ENCODE measurements at regions of chr4 and their contacts with region 1.

Region 1: GRCh38 chr4:142353149-142353738 is 492.9 kb downstream of the INPP4B start:
- DNase-seq: no peak
- ATAC-seq: peak; percentile 42 to 86 (median 78)
- H3K4me3 ChIP-seq: no peak overlapping the region
- H3K27ac ChIP-seq: no peak overlapping the region
- H3K4me1 ChIP-seq: peaks cover 7 to 27% (median 17%) of the 10 kb centered on the region in 3 donors
- H3K27me3 ChIP-seq: no peaks in the 10 kb centered on the region
- CTCF ChIP-seq: peak; percentile 63 to 83 (median 78)

Region 2: GRCh38 chr4:142130666-142131065 is 222.6 kb before region 1 on chr4:
- intact Hi-C with region 1: no loop called
- DNase-seq: no peak
- ATAC-seq: peak; percentile 43 to 79 (median 71)
- H3K4me3 ChIP-seq: no peak overlapping the region
- H3K27ac ChIP-seq: peak overlapping the region in 2 of 4 donors; percentile 39 to 61
- H3K4me1 ChIP-seq: peaks cover 0 to 14% (median 8%) of the 10 kb centered on the region in 3 donors
- H3K27me3 ChIP-seq: no peaks in the 10 kb centered on the region
- CTCF ChIP-seq: no peak

Region 3: GRCh38 chr4:142703694-142704309 is 350.6 kb after region 1 on chr4:
- intact Hi-C with region 1: loop called in 1 of 3 experiments (anchors 10 kb)
- DNase-seq: no peak
- ATAC-seq: no peak
- H3K4me3 ChIP-seq: no peak overlapping the region
- H3K27ac ChIP-seq: no peak overlapping the region
- H3K4me1 ChIP-seq: no peaks in the 10 kb centered on the region
- H3K27me3 ChIP-seq: no peaks in the 10 kb centered on the region
- CTCF ChIP-seq: no peak

Region 4: GRCh38 chr4:142719854-142720541 is 366.8 kb after region 1 on chr4:
- intact Hi-C with region 1: loop called in 1 of 3 experiments (anchors 10 kb)
- DNase-seq: no peak
- ATAC-seq: peak in 3 of 4 donors; percentile 57 to 79 (median 72)
- H3K4me3 ChIP-seq: no peak overlapping the region
- H3K27ac ChIP-seq: no peak overlapping the region
- H3K4me1 ChIP-seq: no peaks in the 10 kb centered on the region
- H3K27me3 ChIP-seq: no peaks in the 10 kb centered on the region
- CTCF ChIP-seq: peak in 1 of 4 donors; percentile 28

Measured in pancreas (tissue), 10 donors.